ENCODE measurements at regions of chr10 and their contacts with region 1.

Region 1: DNA sequence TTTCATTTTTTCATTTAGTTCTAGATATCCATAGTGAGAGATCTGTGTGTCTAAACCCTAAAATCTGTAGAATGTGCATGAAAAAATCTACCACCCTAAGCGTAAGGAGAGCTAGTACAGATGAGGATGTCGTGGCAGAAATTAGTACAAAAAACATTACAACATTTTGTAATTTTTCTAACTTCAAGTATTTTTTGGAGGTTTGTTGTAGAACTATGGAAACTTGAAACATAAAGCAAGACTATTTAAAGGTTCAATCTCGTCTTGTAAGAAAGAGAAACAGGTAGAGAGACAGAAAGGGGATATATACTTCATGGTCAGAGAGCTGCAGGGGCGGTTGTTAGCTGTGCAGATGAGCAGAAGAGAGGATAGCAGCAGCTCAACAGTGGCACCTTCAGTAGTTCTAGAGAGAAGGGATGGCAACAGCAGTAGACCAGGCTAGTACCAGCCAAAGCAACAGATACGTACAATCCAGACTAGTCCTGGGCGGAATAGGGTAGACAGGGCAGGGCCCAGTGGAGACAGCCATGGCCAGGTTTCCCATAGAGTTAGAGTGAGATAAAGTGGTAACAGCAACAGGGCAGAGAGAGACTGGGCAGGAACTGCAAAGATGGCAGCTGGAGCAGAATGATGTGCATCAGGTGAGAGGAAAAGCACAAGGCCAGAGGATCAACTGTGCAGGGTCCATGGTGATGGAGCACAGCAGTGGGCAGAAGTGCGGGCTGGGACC is 145.2 kb downstream of the FRMD4A start:
- DNase-seq: peak; percentile 70
- H3K4me3 Mint-ChIP-seq: peak overlapping the region; percentile 63
- H3K27ac Mint-ChIP-seq: peak overlapping the region; percentile 92
- H3K4me1 Mint-ChIP-seq: peaks cover 26% of the 10 kb centered on the region
- H3K27me3 Mint-ChIP-seq: peaks cover 47% of the 10 kb centered on the region

Region 2: GRCh38 chr10:13787015-13787421 is 398.5 kb before region 1 on chr10:
- CTCF ChIA-PET with region 1: interaction called, 12 read pairs
- POLR2A ChIA-PET with region 1: interaction called, 58 read pairs
- DNase-seq: peak; percentile 75
- H3K4me3 Mint-ChIP-seq: peak overlapping the region; percentile 52
- H3K27ac Mint-ChIP-seq: peak overlapping the region; percentile 86
- H3K4me1 Mint-ChIP-seq: peaks cover 32% of the 10 kb centered on the region
- H3K27me3 Mint-ChIP-seq: no peaks in the 10 kb centered on the region

Region 3: GRCh38 chr10:14124941-14125340 is 60.5 kb before region 1 on chr10:
- CTCF ChIA-PET with region 1: no interaction called
- POLR2A ChIA-PET with region 1: no interaction called
- DNase-seq: no peak
- H3K4me3 Mint-ChIP-seq: no peak overlapping the region
- H3K27ac Mint-ChIP-seq: no peak overlapping the region
- H3K4me1 Mint-ChIP-seq: no peaks in the 10 kb centered on the region
- H3K27me3 Mint-ChIP-seq: peaks cover 4% of the 10 kb centered on the region

Region 4: GRCh38 chr10:14173706-14174594 is 11.5 kb before region 1 on chr10:
- CTCF ChIA-PET with region 1: interaction called, 3 read pairs
- POLR2A ChIA-PET with region 1: interaction called, 50 read pairs
- DNase-seq: peak; percentile 19
- H3K4me3 Mint-ChIP-seq: peak overlapping the region; percentile 54
- H3K27ac Mint-ChIP-seq: no peak overlapping the region
- H3K4me1 Mint-ChIP-seq: peaks cover 15% of the 10 kb centered on the region
- H3K27me3 Mint-ChIP-seq: peaks cover 83% of the 10 kb centered on the region

Region 5: DNA sequence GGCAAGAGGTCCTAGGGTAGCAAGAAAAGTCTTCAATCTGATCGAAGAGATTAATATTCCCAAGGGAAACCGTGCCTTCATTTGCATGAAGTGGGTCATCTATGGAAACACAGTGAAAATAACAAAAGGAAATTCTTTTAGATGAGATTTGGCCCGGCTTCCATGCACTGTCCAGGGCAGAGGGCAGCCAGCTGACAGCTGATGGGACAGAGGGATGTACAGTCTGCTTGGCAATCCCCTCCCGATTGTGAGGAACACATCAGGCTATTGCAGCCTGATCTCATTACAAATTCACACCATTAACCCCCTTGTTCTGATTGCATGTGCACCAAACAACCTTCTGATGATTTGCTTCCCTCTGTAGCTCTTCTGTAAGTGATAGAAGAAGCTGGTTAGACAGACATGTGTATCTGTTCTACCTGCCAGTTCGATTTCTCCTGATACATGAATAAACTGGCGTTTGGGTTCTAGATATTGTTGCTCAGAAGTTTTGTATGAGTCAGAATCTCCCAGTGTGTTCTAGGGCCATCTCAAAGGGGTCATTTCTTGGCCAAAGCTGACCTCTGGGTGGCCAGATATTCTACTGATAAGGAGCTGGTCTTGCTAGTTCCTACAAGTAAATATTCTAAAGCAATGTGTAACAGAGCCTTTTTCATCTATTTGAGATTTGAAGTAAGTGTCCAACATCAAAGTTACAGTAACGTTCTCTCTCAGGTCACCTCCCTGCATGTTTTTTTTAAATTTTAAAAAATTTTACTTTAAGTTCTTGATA is 40.1 kb after region 1 on chr10:
- CTCF ChIA-PET with region 1: interaction called, 4 read pairs
- POLR2A ChIA-PET with region 1: interaction called, 35 read pairs
- DNase-seq: no peak
- H3K4me3 Mint-ChIP-seq: no peak overlapping the region
- H3K27ac Mint-ChIP-seq: no peak overlapping the region
- H3K4me1 Mint-ChIP-seq: peaks cover 3% of the 10 kb centered on the region
- H3K27me3 Mint-ChIP-seq: peaks cover 23% of the 10 kb centered on the region

Region 6: GRCh38 chr10:14878266-14879054 is 693.0 kb after region 1 on chr10 and contains the start of gene SUV39H2:
- CTCF ChIA-PET with region 1: no interaction called
- POLR2A ChIA-PET with region 1: interaction called, 22 read pairs
- DNase-seq: peak; percentile 96
- H3K4me3 Mint-ChIP-seq: peak within 1 kb of the TSS; percentile 95
- H3K27ac Mint-ChIP-seq: peak within 1 kb of the TSS; percentile 82
- H3K4me1 Mint-ChIP-seq: peaks cover 56% of the 10 kb centered on the region
- H3K27me3 Mint-ChIP-seq: no peaks in the 10 kb centered on the region
- total RNA-seq, gene SUV39H2: 24.5 to 25.2 TPM